ENCODE measurements at regions of chr7 and their contacts with region 1.

Region 1: DNA sequence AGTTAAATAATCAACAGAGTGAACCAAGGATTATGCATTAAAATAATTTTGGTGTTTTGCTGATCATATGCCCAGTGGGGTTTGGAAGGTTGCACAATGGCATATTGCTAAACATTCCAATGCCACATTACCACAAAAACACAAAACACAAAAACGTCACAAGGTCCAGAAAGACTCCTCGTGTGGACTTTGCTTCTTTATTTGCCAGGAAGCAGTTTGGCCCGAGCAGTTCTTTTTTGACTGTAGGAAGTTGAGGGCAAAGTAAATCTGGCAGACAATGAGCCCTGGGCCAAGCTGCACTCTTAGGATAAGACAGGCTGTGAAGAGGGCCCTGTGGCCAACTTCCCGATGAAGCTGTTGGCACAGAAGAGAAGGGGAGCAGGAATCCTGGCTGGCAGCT is 39.2 kb upstream of the SLC35B4 start:
- DNase-seq: no peak
- H3K4me3 Mint-ChIP-seq: no peak overlapping the region
- H3K27ac Mint-ChIP-seq: no peak overlapping the region
- H3K4me1 Mint-ChIP-seq: peaks cover 5% of the 10 kb centered on the region
- H3K27me3 Mint-ChIP-seq: peaks cover 3% of the 10 kb centered on the region

Region 2: DNA sequence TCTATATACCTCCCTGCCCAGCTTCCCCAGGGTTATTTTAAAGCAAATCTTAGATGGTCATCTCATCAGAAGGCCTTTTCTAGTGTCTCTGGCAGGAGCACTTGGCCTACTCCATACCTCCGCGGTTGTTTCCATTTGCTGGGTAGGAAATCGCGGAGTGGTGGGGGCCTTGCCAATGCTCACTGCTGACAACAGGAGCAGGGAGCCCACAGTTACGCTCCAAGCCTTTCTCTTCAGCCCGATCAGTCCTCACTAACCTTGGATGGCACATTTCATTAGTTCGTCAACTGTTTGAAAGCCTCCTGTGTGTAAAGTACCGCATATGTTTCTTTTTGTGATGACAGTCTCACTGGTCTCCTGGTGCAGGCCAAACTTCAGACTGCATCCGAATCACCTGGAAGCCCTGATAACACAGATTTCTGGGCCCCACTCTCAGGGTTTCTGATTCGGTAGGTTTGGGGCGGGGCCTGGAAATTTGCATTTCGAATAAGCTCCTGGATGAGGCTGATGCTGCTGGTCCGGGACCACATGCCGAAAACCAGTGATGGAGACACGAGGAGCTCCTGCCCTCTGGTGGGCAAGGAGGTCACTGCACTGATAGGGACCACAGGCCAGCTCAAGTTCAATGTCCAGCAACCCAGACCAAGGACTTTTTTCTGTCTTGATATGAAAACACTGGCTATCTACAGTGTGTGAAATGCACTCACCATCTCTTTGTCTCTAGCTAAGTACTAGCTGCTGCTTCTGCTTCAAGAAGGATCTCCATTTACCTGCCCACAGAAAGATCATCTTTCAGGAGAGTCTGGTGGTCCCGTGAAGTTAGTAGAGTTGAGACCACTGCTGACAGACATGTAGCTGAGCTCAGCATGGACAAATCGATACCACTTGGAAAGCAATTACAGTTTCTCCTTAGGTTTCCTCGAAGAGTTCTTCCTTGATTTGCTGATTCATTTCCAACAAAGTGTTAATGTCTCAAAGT is 214.7 kb before region 1 on chr7:
- intact Hi-C with region 1: loop called (anchors 1 kb)
- DNase-seq: peak; percentile 6
- H3K4me3 Mint-ChIP-seq: no peak overlapping the region
- H3K27ac Mint-ChIP-seq: no peak overlapping the region
- H3K4me1 Mint-ChIP-seq: no peaks in the 10 kb centered on the region
- H3K27me3 Mint-ChIP-seq: peaks cover 3% of the 10 kb centered on the region

Measured in activated T-helper 1 cell treated with anti-CD3 and anti-CD28 coated beads, Interleukin-12 subunit alpha, Interleukin-12 subunit beta, Interleukin-2, Interleukin-4 antibody, amounts not matched to agents 30 ng/mL and 10 ng/mL and 1 ng/mL, durations not matched to agents 14 hours and 24 hours and 36 hours (primary cell).